ENCODE measurements at regions of chr1 and their contacts with region 1.

Region 1: GRCh38 chr1:203480525-203481084 is 5.0 kb downstream of the PRELP start:
- DNase-seq: peak; percentile 60
- H3K4me3 ChIP-seq: no peak overlapping the region
- H3K27ac ChIP-seq: peak overlapping the region; percentile 60 to 77
- H3K4me1 ChIP-seq: no peaks in the 10 kb centered on the region
- H3K27me3 ChIP-seq: no peaks in the 10 kb centered on the region
- CTCF ChIP-seq: no peak
- POLR2A ChIP-seq: no peak

Region 2: DNA sequence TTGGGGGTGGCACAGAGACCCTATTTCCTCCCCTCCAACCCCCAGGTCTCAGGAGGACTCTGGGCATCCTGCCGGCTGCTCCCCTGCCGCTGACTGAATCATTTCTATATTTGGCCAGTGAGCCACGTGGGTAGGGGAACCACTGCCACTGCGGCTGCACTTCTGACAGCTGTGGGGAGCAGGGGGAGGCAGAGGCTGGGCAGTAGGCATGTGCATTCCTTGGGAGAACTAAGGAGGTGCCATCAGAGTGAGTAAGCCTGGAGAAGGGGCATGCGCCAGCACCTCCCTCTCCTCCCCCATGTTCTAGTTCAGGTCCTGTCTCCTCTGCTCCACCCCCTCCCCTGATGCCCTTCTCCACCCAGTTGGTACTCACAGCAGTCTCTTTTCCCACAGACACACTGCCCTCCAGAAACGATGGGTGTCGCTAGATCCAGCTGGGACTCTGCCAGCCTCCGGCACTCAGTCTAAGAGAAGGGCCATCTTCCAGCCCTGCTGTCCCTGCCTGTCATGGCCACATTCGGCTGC is 442.3 kb before region 1 on chr1:
- intact Hi-C with region 1: no loop called
- DNase-seq: peak; percentile 84
- H3K4me3 ChIP-seq: no peak overlapping the region
- H3K27ac ChIP-seq: no peak overlapping the region
- H3K4me1 ChIP-seq: no peaks in the 10 kb centered on the region
- H3K27me3 ChIP-seq: no peaks in the 10 kb centered on the region
- CTCF ChIP-seq: no peak
- POLR2A ChIP-seq: no peak

Region 3: DNA sequence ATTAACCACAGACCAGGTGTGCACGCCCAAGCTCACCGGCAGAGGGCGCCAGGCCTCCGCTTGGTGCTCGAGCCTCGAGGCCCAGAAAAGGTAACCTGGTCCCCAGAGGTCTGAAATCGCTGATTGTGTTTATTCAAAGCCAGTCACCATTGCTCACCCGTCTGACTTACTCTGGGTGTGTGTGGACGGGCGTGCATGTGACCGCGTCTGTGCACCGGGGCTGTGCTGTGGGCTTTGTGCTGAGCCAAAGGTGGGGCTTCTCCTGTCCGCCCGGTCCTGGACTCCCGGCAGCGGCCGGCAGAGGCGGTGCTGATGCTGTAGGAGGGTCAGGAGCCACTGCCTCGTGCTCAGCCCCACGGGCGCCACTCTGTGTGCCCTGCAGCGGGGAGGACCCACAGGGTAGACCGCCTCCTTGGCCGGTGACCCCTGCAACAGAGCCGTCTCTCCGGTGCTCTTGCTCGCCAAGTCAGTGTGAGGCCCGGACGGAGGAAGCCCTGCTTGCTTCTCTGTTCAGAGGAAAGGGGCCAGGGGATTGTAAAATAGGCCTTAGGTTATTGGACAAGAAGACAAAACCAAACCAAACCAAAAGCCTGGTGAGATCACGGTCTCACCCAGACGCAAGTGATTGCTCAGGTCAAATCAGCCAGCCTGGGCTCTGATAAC is 207.3 kb before region 1 on chr1:
- intact Hi-C with region 1: loop called (anchors 10 kb)
- DNase-seq: peak; percentile 93
- H3K4me3 ChIP-seq: peak overlapping the region; percentile 6 to 46
- H3K27ac ChIP-seq: peak overlapping the region; percentile 78 to 83
- H3K4me1 ChIP-seq: peaks cover 50% of the 10 kb centered on the region
- H3K27me3 ChIP-seq: no peaks in the 10 kb centered on the region
- CTCF ChIP-seq: peak; percentile 98 to 99 (median 98)
- POLR2A ChIP-seq: no peak

Region 4: GRCh38 chr1:203340112-203340804 is 140.3 kb before region 1 on chr1:
- intact Hi-C with region 1: loop called (anchors 10 kb)
- DNase-seq: peak; percentile 84
- H3K4me3 ChIP-seq: no peak overlapping the region
- H3K27ac ChIP-seq: peak overlapping the region; percentile 39 to 51
- H3K4me1 ChIP-seq: peaks cover 24% of the 10 kb centered on the region
- H3K27me3 ChIP-seq: no peaks in the 10 kb centered on the region
- CTCF ChIP-seq: peak; percentile 78 to 83 (median 83)
- POLR2A ChIP-seq: no peak

Region 5: DNA sequence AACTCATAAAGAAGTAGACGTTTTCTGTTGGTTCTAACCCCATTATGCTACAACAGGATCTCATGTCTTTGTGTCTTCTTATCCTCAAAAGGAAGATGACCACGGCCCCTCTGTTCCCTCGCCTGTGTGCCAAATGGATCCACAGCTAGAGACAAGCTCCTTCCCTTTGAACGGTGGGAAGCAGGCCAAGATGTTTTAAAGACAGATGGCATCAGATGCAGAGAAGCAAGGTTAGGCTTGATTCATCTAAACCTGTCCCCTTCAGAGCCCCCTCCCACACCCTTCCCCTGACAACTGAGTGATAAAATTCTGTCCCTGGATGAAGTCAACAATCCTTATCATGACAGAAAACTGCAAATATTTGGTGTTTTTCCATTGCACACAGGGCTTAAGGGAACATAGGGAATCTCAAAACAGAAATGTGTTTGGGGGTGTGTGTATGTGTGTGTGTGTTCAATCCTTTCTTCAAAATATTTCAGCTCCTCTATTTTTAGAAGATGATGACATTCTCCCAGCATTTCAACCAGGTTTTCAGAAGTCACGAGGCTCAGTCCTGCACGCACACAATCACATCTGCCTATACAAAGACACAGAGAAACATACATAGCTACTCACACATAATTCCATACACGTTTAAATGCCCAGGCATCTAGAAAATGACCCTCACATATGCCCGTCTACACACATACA is 101.9 kb before region 1 on chr1:
- intact Hi-C with region 1: loop called (anchors 10 kb)
- DNase-seq: no peak
- H3K4me3 ChIP-seq: no peak overlapping the region
- H3K27ac ChIP-seq: peak overlapping the region in 1 of 2 donors; percentile 42
- H3K4me1 ChIP-seq: peaks cover 15% of the 10 kb centered on the region
- H3K27me3 ChIP-seq: no peaks in the 10 kb centered on the region
- CTCF ChIP-seq: no peak
- POLR2A ChIP-seq: no peak

Region 6: DNA sequence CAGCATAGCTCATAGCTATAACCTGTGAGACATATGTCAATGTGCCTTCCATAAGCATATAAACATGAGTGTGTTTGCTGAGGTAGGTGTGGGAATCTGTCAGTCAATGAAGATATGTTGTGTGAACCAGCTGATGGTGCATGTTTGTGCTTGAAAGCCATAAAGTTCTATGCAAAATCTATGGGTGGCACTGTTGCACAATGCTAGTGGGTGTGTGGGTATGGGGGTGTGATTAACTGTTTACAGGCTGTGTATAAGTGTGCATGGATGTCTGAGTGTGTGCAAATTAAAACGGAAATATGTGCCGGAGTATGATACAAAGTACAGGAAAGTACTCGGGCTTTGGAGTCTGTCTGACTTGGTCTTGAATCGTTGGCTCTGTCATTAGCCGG is 145.0 kb after region 1 on chr1:
- intact Hi-C with region 1: no loop called
- DNase-seq: peak; percentile 54
- H3K4me3 ChIP-seq: no peak overlapping the region
- H3K27ac ChIP-seq: peak overlapping the region in 1 of 2 donors; percentile 73
- H3K4me1 ChIP-seq: peaks cover 26% of the 10 kb centered on the region
- H3K27me3 ChIP-seq: no peaks in the 10 kb centered on the region
- CTCF ChIP-seq: peak in 1 of 3 experiments; percentile 32
- POLR2A ChIP-seq: no peak